ENCODE measurements at regions of chr5 and their contacts with region 1.

Region 1: GRCh38 chr5:76867827-76868693 is 18.2 kb downstream of the S100Z start:
- DNase-seq: peak; percentile 85
- H3K4me3 Mint-ChIP-seq: peak overlapping the region; percentile 42
- H3K27ac Mint-ChIP-seq: peak overlapping the region; percentile 83
- H3K4me1 Mint-ChIP-seq: peaks cover 25% of the 10 kb centered on the region
- H3K27me3 Mint-ChIP-seq: no peaks in the 10 kb centered on the region
- CTCF ChIP-seq: peak; percentile 83

Region 2: DNA sequence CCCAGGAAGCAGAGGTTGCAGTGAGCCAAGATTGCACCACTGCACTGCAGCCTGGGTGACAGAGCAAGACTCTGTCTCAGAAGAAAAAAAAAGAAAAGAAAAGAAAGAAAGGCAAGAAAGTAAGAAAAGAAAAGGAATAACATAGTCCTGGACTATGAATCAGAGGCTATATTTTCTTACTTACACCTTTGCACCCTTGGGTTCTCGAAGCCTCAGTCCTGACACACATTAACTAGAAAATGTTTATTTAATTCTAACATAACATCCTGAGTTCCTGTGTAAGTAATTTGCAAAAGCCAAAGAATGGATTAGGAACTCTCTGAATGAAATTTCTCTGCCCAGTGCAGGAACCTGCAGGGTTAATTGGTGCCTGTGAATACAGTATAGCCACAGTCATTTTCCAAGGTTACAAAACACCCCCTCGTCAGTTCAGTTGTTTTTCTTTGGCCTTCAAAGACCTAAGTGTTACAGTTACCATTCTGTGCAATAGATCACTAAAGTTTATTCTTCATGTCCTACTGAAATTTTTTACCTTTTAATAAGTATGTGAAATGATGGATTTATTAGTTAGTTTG is 637.3 kb before region 1 on chr5:
- CTCF ChIA-PET with region 1: no interaction called
- intact Hi-C with region 1: no loop called
- DNase-seq: no peak
- H3K4me3 Mint-ChIP-seq: no peak overlapping the region
- H3K27ac Mint-ChIP-seq: no peak overlapping the region
- H3K4me1 Mint-ChIP-seq: peaks cover 16% of the 10 kb centered on the region
- H3K27me3 Mint-ChIP-seq: no peaks in the 10 kb centered on the region
- CTCF ChIP-seq: no peak

Region 3: GRCh38 chr5:76601470-76601869 is 266.6 kb before region 1 on chr5:
- CTCF ChIA-PET with region 1: interaction called, 13 read pairs
- intact Hi-C with region 1: loop called (anchors 2 kb)
- DNase-seq: peak; percentile 57
- H3K4me3 Mint-ChIP-seq: no peak overlapping the region
- H3K27ac Mint-ChIP-seq: no peak overlapping the region
- H3K4me1 Mint-ChIP-seq: peaks cover 19% of the 10 kb centered on the region
- H3K27me3 Mint-ChIP-seq: no peaks in the 10 kb centered on the region
- CTCF ChIP-seq: peak; percentile 64

Region 4: GRCh38 chr5:77015938-77016569 is 148.0 kb after region 1 on chr5:
- CTCF ChIA-PET with region 1: interaction called, 27 read pairs
- intact Hi-C with region 1: loop called (anchors 1 kb)
- DNase-seq: no peak
- H3K4me3 Mint-ChIP-seq: no peak overlapping the region
- H3K27ac Mint-ChIP-seq: no peak overlapping the region
- H3K4me1 Mint-ChIP-seq: no peaks in the 10 kb centered on the region
- H3K27me3 Mint-ChIP-seq: no peaks in the 10 kb centered on the region
- CTCF ChIP-seq: peak; percentile 50

Region 5: GRCh38 chr5:77030097-77031071 is 162.3 kb after region 1 on chr5 and contains the start of gene AGGF1:
- CTCF ChIA-PET with region 1: interaction called, 14 read pairs
- intact Hi-C with region 1: no loop called
- DNase-seq: peak; percentile 96
- H3K4me3 Mint-ChIP-seq: peak within 1 kb of the TSS; percentile 86
- H3K27ac Mint-ChIP-seq: peak within 1 kb of the TSS; percentile 50
- H3K4me1 Mint-ChIP-seq: peaks cover 8% of the 10 kb centered on the region
- H3K27me3 Mint-ChIP-seq: no peaks in the 10 kb centered on the region
- CTCF ChIP-seq: no peak
- total RNA-seq, gene AGGF1: 29.5 and 32.3 TPM in 2 replicates

Region 6: DNA sequence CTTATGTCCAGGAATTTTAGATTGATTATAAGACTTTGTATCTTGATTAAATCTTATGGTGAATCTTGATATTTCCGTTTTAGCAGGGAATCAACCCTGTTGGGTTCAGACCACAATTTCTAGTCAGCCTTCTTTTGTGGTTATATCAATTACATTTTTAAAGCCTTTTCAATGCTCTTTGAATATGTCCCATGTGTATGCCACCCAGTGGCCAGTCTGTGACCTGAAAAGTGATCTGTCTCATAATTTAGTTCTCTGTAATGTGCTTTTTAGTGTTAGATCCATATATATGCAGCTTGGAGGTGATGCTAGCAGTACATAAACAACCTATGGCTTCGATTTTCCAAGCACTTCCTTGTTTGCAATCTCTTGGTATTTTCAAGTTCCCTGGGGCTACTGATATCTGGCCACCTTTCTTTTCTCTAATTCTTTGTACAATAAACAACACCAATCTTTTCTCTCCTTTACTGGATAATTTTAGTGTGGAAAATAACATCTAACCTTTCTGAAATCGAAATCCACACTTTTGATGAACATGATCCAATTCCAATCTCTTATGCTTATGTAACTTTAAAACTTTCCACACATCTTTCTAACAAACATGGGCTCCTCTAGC is 371.2 kb after region 1 on chr5:
- CTCF ChIA-PET with region 1: interaction called, 3 read pairs
- intact Hi-C with region 1: loop called (anchors 2 kb)
- DNase-seq: peak; percentile 48
- H3K4me3 Mint-ChIP-seq: no peak overlapping the region
- H3K27ac Mint-ChIP-seq: no peak overlapping the region
- H3K4me1 Mint-ChIP-seq: peaks cover 9% of the 10 kb centered on the region
- H3K27me3 Mint-ChIP-seq: peaks cover 15% of the 10 kb centered on the region
- CTCF ChIP-seq: peak; percentile 70

Region 7: DNA sequence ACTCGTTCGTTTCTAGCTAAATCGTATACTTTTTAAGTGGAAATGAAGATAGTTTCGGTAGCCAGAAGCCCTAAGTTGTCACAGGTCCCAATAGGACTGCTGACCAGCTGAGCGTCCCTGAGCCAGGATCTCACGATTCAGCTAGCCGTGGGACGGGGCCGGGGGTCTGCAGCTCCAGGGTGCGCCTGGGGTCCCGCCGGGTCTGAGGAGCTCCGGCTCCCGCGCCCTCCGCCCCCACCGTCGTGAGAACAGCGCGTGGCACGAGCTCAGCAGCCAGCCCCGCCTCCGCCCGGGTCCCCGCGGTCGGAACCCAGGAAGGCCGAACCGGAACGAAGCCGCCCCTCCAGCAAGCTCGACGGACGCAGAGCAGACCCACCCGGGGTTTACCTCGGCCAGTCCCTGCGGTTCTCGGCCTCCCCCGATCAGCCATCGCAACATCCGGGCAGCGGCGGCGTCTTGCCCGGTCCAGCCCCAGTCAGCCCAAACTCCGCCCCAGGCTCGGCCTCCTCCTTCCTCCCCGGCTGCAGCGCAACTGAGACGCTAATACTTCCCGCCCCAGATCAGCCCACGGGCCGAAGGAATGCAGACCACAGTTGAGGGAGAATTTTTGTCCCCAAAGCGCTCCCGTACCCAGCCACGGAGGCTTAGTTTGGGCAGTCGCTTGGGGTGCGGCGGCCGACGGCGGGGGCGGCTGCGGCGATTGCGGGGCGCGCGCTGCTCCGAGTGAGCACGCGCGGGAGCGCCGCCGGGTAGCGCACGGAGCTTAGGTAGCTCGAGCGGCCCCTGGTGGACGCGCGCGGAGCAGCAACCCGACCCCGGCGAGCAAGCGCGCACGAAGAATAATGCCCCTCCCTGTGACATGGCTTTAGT is 624.0 kb after region 1 on chr5 and contains the start of gene WDR41:
- CTCF ChIA-PET with region 1: interaction called, 3 read pairs
- intact Hi-C with region 1: loop called (anchors 2 kb)
- DNase-seq: peak; percentile 94
- H3K4me3 Mint-ChIP-seq: peak within 1 kb of the TSS; percentile 90
- H3K27ac Mint-ChIP-seq: peak within 1 kb of the TSS; percentile 88
- H3K4me1 Mint-ChIP-seq: no peaks in the 10 kb centered on the region
- H3K27me3 Mint-ChIP-seq: no peaks in the 10 kb centered on the region
- CTCF ChIP-seq: peak; percentile 87
- total RNA-seq, gene WDR41: 26.5 and 35.4 TPM in 2 replicates

Measured in Calu3 (cell line).